Endothelial cell of umbilical vein (primary cell): ENCODE measurements at regions of chr17 and their contacts with region 1.

Region 1: DNA sequence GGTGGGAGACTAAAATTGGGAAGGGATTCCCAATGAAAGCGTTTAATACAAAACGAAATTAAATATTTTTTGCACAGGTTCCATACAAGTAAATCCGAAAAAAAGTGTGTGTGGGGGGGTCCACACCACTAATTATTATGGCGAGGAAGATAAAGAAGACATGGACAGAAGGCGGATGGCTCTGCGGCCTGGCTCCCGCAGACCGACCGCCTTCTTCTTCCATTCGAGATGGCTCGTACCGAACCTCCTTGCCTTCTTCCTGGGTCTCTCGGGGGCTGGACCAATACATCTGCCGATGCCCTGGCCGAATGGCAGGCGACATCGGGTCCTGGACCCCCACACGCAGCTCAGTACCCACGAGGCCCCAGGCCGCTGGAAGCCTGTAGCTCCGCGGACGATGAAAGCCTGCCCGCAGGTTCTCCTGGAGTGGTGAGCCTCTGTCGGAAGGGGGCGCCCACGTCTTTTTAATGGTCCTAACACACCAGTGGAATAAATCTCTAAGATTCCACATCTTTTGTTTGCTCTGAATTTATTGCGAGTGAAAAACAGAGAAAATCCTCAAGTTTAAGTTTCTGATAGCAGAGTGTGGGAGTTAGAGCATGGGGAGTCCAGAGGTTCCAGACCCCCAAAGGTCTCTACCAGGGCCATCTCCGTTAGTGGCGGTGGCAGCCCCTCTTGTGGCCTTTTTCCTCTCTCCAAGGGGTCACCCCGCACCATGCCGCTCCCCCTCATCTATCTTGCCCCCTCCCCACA is 1.4 kb downstream of the PRAC2 start:
- DNase-seq: peak; percentile 69
- H3K4me3 ChIP-seq: no peak overlapping the region
- H3K27ac ChIP-seq: no peak overlapping the region
- H3K4me1 ChIP-seq: peaks cover 5% of the 10 kb centered on the region
- H3K27me3 ChIP-seq: peaks cover 93 to 98% of the 10 kb centered on the region in 2 experiments
- CTCF ChIP-seq: peak; percentile 74 to 81
- POLR2A ChIP-seq: no peak

Region 2: DNA sequence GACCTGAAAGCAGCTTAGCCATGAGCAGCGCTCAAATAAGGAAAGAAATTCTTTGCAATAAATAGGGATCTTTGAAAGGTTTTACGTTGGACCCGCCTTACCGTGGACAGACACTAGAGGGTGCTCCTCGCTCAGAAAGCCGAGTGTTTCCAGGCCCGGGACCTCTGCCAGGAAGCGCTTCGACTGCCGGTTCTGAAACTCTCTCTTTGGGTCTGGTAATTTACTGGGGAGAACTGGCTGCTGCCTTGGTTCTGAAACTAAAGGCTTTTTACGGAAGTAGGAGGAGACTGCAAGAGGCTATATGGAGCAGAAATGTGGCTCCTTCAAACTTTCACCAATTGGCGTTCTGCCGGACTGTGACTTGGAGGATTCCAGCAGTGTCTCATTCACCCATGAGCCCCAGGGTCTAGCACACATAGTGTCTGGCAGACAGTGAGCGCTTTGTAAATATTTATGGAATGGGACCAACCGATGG is 52.7 kb before region 1 on chr17:
- CTCF ChIA-PET with region 1: interaction called, 12 read pairs
- POLR2A ChIA-PET with region 1: no interaction called
- dilution Hi-C with region 1: no loop called
- intact Hi-C with region 1: no loop called
- DNase-seq: peak; percentile 77
- H3K4me3 ChIP-seq: peak overlapping the region in 1 of 3 experiments; percentile 43
- H3K27ac ChIP-seq: no peak overlapping the region
- H3K4me1 ChIP-seq: no peaks in the 10 kb centered on the region
- H3K27me3 ChIP-seq: peaks cover 12 to 21% of the 10 kb centered on the region in 2 experiments
- CTCF ChIP-seq: peak; percentile 79 to 88
- POLR2A ChIP-seq: no peak

Region 3: GRCh38 chr17:48711102-48711501 is 13.3 kb before region 1 on chr17:
- CTCF ChIA-PET with region 1: interaction called, 19 read pairs
- POLR2A ChIA-PET with region 1: no interaction called
- dilution Hi-C with region 1: no loop called
- intact Hi-C with region 1: no loop called
- DNase-seq: no peak
- H3K4me3 ChIP-seq: no peak overlapping the region
- H3K27ac ChIP-seq: no peak overlapping the region
- H3K4me1 ChIP-seq: no peaks in the 10 kb centered on the region
- H3K27me3 ChIP-seq: peaks cover 29 to 39% of the 10 kb centered on the region in 2 experiments
- CTCF ChIP-seq: no peak
- POLR2A ChIP-seq: no peak

Region 4: GRCh38 chr17:48751172-48751571 is 26.7 kb after region 1 on chr17:
- CTCF ChIA-PET with region 1: interaction called, 25 read pairs
- POLR2A ChIA-PET with region 1: no interaction called
- dilution Hi-C with region 1: no loop called
- intact Hi-C with region 1: no loop called
- DNase-seq: no peak
- H3K4me3 ChIP-seq: no peak overlapping the region
- H3K27ac ChIP-seq: no peak overlapping the region
- H3K4me1 ChIP-seq: peaks cover 16% of the 10 kb centered on the region
- H3K27me3 ChIP-seq: peaks cover 85 to 95% of the 10 kb centered on the region in 2 experiments
- CTCF ChIP-seq: no peak
- POLR2A ChIP-seq: no peak

Region 5: DNA sequence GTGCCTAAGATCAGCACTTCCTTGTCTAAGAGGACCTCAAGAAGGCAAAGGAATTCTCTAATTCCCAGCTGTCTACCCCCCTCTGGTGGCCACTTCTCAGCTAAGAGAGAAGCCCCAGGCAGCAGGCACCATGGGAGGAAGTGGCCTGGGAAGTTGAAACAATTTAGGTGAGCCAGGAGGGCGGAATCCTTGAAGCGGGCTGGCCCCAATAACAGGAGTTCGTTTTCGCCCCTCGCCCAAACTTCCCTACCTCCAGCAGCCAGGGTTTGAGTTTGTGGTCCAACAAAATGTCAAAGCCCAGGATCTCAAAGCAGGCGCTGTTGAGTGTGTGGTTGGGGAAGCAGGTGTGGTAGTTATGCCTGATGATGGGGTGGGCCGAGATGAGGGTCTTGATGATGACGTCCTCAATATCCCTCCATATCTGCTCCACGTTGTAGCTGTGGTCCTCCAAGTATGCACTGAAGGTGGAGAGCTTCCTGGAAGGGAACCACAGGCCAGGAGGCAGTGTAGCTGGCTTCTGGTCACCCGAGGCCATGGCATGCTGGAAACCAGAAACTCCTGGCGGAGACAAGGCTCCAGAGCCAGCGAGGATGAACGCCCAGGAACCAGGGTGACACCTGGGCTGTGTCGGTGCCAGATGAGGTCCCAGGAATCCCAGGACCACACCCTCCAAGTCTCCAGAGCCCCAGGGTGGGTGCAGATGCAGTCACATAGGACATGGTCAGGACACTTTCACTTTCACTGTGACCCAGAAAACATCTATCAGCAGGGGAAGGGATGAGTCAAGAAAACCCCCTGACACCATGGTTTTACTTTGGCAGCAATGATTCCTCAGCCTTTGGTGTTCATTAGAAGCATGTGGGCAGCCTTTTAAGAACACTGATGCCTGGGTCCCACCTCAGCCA is 67.0 kb after region 1 on chr17:
- CTCF ChIA-PET with region 1: interaction called, 312 read pairs
- POLR2A ChIA-PET with region 1: no interaction called
- dilution Hi-C with region 1: no loop called
- intact Hi-C with region 1: loop called (anchors 1 kb)
- DNase-seq: peak; percentile 79
- H3K4me3 ChIP-seq: no peak overlapping the region
- H3K27ac ChIP-seq: no peak overlapping the region
- H3K4me1 ChIP-seq: no peaks in the 10 kb centered on the region
- H3K27me3 ChIP-seq: peaks cover 9 to 15% of the 10 kb centered on the region in 2 experiments
- CTCF ChIP-seq: peak; percentile 78 to 84
- POLR2A ChIP-seq: no peak

Region 6: GRCh38 chr17:48816774-48817590 is 92.6 kb after region 1 on chr17 and contains the start of gene TTLL6:
- CTCF ChIA-PET with region 1: interaction called, 39 read pairs
- POLR2A ChIA-PET with region 1: no interaction called
- dilution Hi-C with region 1: no loop called
- intact Hi-C with region 1: no loop called
- DNase-seq: peak; percentile 85
- H3K4me3 ChIP-seq: peak within 1 kb of the TSS in 2 of 3 experiments; percentile 14 to 40
- H3K27ac ChIP-seq: no peak within 1 kb of the TSS
- H3K4me1 ChIP-seq: peaks cover 6% of the 10 kb centered on the region
- H3K27me3 ChIP-seq: peaks cover 11 to 21% of the 10 kb centered on the region in 2 experiments
- CTCF ChIP-seq: no peak
- POLR2A ChIP-seq: no peak
- total RNA-seq, gene TTLL6: not detected in 2 replicates